PC-3 (cell line): ENCODE measurements at regions of chr6 and their contacts with region 1.

Region 1: DNA sequence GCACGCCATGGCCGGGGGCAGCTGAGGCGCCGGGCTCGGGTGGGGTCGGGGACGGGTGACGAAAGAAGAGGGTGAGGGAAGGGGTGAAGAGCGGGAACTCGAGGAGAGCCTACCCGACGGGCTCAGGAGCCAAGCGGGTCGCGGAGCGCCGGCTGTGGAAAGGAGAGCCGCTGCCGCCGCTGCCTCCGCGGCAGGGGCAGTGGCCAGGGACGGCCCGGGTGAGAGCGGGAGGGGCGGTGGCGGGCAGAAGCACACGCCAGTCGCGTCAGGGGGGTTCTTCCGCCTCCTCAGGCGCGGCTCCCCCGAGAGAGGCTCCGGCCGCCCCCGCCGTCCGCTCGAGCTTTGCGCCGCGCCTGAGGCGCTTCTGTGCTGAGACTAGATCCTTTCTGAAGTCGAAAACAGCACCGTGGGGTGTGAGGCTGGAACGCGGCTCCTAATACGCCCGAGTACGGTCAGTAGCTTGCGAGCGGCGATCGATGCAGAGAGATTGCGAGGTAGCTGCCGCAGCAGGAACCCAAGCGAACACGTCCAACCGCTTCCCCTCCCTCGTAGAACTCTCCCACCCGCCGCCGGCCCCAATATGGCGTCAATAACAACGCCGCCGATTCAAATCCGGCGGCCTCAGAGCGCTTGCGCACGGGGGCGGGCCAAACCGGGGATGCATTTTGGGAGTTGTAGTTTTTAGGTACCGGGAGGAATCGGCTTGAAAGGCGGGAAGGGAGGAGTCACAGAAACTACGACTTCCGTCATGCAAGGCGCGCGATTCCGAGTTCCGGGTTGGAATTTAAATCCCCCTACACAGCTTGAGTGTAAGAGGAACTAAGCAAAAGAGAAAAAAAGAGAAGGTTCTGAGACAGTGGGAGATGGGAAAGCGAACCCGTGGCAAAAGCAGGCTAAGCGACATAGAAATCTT is at the start of gene AKIRIN2:
- DNase-seq: peak; percentile 96
- ATAC-seq: peak; percentile 62
- H3K4me3 ChIP-seq: peak within 1 kb of the TSS; percentile 98
- H3K27ac ChIP-seq: peak within 1 kb of the TSS; percentile 78
- H3K4me1 ChIP-seq: peaks cover 40% of the 10 kb centered on the region
- H3K27me3 ChIP-seq: no peaks in the 10 kb centered on the region
- CTCF ChIP-seq: no peak
- total RNA-seq, gene AKIRIN2: 15.1 and 21.4 TPM in 2 replicates

Region 2: DNA sequence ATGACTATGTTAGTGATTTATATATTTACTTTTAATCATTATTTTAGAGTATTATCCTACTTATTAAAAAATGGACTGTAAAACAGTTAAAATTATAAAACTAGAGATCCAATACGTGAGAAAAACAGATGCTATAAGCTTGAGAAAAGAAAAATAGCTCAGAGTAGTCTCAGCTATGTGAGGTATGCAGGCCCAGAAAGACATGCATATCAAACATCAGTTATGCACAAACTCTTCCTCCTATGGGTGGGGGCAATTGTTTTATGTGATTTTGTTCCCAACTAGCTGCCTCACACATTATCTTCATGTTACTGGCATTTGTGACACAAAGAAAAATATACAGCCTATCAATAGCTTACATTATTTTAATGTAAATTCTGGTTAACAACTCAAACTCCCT is 140.9 kb before region 1 on chr6:
- CTCF ChIA-PET with region 1: no interaction called
- POLR2A ChIA-PET with region 1: no interaction called
- intact Hi-C with region 1: no loop called
- DNase-seq: no peak
- ATAC-seq: no peak
- H3K4me3 ChIP-seq: no peak overlapping the region
- H3K27ac ChIP-seq: no peak overlapping the region
- H3K4me1 ChIP-seq: no peaks in the 10 kb centered on the region
- H3K27me3 ChIP-seq: no peaks in the 10 kb centered on the region
- CTCF ChIP-seq: no peak

Region 3: GRCh38 chr6:87589693-87590549 is 112.0 kb before region 1 on chr6 and contains the starts of genes ORC3 and RARS2:
- CTCF ChIA-PET with region 1: no interaction called
- POLR2A ChIA-PET with region 1: interaction called, 3 read pairs
- intact Hi-C with region 1: loop called (anchors 2 kb)
- DNase-seq: peak; percentile 92
- ATAC-seq: peak; percentile 99
- H3K4me3 ChIP-seq: peak within 1 kb of the TSS; percentile 96
- H3K27ac ChIP-seq: peak within 1 kb of the TSS; percentile 34
- H3K4me1 ChIP-seq: peaks cover 21% of the 10 kb centered on the region
- H3K27me3 ChIP-seq: no peaks in the 10 kb centered on the region
- CTCF ChIP-seq: no peak
- total RNA-seq, gene ORC3: 17.0 and 25.7 TPM in 2 replicates
- total RNA-seq, gene RARS2: 12.7 and 14.8 TPM in 2 replicates

Region 4: GRCh38 chr6:87641065-87641692 is 60.8 kb before region 1 on chr6:
- CTCF ChIA-PET with region 1: no interaction called
- POLR2A ChIA-PET with region 1: interaction called, 10 read pairs
- intact Hi-C with region 1: no loop called
- DNase-seq: no peak
- ATAC-seq: no peak
- H3K4me3 ChIP-seq: no peak overlapping the region
- H3K27ac ChIP-seq: no peak overlapping the region
- H3K4me1 ChIP-seq: no peaks in the 10 kb centered on the region
- H3K27me3 ChIP-seq: no peaks in the 10 kb centered on the region
- CTCF ChIP-seq: no peak

Region 5: GRCh38 chr6:87682310-87682709 is 19.6 kb before region 1 on chr6:
- CTCF ChIA-PET with region 1: no interaction called
- POLR2A ChIA-PET with region 1: no interaction called
- intact Hi-C with region 1: no loop called
- DNase-seq: peak; percentile 62
- ATAC-seq: peak; percentile 65
- H3K4me3 ChIP-seq: no peak overlapping the region
- H3K27ac ChIP-seq: 0 out of 2 replicates have a peak overlapping the region, but pooled peaks have one; percentile 21
- H3K4me1 ChIP-seq: peaks cover 22% of the 10 kb centered on the region
- H3K27me3 ChIP-seq: no peaks in the 10 kb centered on the region
- CTCF ChIP-seq: no peak

Region 6: DNA sequence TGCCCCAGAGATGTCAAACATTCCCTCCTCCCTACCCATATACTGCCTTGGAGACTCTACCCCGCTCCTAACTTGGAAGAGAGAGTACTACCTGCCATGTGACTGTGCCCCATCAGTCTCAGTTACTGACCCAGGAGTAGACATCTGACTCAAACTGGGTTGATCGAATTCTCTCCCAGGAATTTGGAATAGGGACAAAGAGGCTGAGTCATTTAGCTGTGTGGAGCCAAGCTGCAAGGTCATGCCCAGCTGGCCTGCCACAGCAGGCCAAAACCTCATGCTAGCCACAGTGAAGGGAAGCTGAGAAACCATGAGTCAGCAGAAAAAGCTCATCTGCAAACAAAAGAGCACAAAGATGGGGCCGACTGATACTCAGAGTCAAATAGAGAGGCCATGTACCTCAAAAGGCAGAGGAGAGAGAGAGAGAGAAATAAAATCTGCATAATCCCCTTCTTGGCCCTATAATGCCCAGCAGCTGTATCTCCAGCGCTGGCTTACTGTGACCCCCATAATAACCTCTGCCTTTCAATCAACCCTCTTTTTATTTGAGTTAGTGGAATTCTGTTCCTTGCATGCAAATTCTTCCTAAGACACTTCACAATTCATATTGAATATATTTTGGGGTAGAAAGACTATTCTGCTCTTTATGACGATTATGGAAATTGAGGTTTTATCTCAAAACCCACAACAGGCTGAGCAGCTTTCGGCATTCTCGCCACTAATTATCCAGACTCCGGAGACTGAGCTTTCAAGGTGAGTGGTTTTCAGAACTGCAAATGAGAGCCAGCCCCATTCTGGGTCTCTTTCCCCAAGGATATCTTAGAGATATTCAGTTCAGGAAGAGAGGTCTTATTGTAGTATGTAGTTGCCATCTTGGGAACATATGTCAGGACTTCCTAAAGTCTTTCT is 21.5 kb after region 1 on chr6:
- CTCF ChIA-PET with region 1: interaction called, 3 read pairs
- POLR2A ChIA-PET with region 1: interaction called, 7 read pairs
- intact Hi-C with region 1: loop called (anchors 1 kb)
- DNase-seq: peak; percentile 97
- ATAC-seq: peak; percentile 91
- H3K4me3 ChIP-seq: no peak overlapping the region
- H3K27ac ChIP-seq: peak overlapping the region; percentile 85
- H3K4me1 ChIP-seq: peaks cover 36% of the 10 kb centered on the region
- H3K27me3 ChIP-seq: no peaks in the 10 kb centered on the region
- CTCF ChIP-seq: no peak

Region 7: DNA sequence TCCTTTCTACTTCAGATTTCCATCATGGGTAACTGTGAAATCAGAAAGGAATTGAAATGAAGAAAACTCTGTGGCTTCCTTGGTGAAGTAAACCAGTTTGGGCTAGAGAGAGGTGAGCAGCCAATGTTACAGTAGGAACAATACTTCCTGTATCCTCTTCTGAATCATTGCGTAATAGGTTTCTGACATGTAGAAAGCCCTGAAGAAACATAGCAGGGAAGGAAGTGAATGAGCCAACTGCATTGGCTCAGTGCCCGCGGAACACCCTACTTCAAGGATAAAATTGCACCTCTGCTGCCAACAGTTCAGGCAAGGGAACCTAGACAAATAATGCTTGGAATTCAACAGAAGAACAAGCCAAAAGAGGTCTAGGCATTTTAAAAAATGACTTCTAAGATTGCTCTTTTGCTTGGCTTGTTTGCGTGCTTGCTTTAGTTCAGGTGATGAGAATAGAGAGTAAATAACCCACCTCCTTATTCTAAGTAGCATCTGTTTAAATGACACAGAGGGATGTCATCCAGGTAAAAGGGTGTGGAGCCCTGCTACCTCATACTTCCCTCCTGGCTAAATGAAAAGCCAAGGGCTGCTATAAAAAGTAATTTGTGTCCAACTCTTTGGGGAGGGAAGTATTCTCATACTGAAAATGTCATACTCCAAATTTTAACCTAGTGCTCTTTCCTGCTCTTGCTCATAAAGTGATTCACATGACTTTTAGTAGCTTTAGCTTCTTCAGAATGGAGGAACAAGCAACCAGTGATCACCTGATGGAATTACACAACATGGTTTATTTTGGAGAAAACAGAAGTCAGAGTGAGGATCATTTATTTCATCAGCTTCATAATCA is 30.1 kb after region 1 on chr6:
- CTCF ChIA-PET with region 1: no interaction called
- POLR2A ChIA-PET with region 1: interaction called, 6 read pairs
- intact Hi-C with region 1: loop called (anchors 1 kb)
- DNase-seq: peak; percentile 91
- ATAC-seq: peak; percentile 79
- H3K4me3 ChIP-seq: peak overlapping the region; percentile 38; the same call in 1 of the 2 replicates
- H3K27ac ChIP-seq: peak overlapping the region; percentile 93
- H3K4me1 ChIP-seq: peaks cover 54% of the 10 kb centered on the region
- H3K27me3 ChIP-seq: no peaks in the 10 kb centered on the region
- CTCF ChIP-seq: no peak

Region 8: GRCh38 chr6:87808005-87808757 is 106.2 kb after region 1 on chr6:
- CTCF ChIA-PET with region 1: no interaction called
- POLR2A ChIA-PET with region 1: no interaction called
- intact Hi-C with region 1: loop called (anchors 1 kb)
- DNase-seq: peak; percentile 91
- ATAC-seq: peak; percentile 89
- H3K4me3 ChIP-seq: no peak overlapping the region
- H3K27ac ChIP-seq: peak overlapping the region; percentile 69
- H3K4me1 ChIP-seq: peaks cover 25% of the 10 kb centered on the region
- H3K27me3 ChIP-seq: no peaks in the 10 kb centered on the region
- CTCF ChIP-seq: no peak

Region 9: DNA sequence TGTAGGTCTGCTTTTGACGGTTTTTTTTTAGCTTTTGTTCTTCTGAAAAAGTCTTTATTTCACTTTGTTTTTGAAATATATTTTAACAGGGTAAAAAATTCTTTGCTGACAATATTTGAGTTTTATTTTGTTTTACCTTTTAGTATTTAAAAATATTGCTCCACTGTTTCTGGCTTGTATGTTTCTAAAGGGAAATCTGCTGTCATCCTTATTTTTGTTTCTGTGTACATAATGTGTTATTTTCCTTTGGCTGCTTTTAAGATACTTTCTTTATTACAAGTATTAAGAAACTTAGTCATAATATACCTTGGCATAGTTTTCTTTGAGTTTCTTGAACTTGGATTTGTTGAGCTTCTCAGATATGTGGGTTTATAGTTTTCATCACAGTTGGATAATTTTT is 257.2 kb after region 1 on chr6:
- CTCF ChIA-PET with region 1: no interaction called
- POLR2A ChIA-PET with region 1: no interaction called
- intact Hi-C with region 1: no loop called
- DNase-seq: no peak
- ATAC-seq: no peak
- H3K4me3 ChIP-seq: no peak overlapping the region
- H3K27ac ChIP-seq: no peak overlapping the region
- H3K4me1 ChIP-seq: no peaks in the 10 kb centered on the region
- H3K27me3 ChIP-seq: peaks cover 3% of the 10 kb centered on the region; the same call in 1 of the 2 replicates
- CTCF ChIP-seq: no peak